K562 (cell line): ENCODE measurements at regions of chrX and their contacts with region 1.

Region 1: GRCh38 chrX:154515878-154516655 is at the start of gene FAM3A:
- DNase-seq: peak; percentile 90 to 93 (median 90)
- ATAC-seq: peak; percentile 95
- H3K4me3 ChIP-seq: peak within 1 kb of the TSS; percentile 89
- H3K27ac ChIP-seq: peak within 1 kb of the TSS; percentile 94
- H3K4me1 ChIP-seq: peaks cover 18 to 40% of the 10 kb centered on the region in 2 experiments; a peak in 4 of 5 replicates
- H3K27me3 ChIP-seq: no peaks in the 10 kb centered on the region
- CTCF ChIP-seq: no peak
- EP300 ChIP-seq: no peak; the same call in 1 of the 2 replicates
- POLR2A ChIP-seq: peak; percentile 83
- RAD21 ChIP-seq: no peak
- polyA plus RNA-seq, gene FAM3A: 0.75 to 1.8 TPM

Region 2: GRCh38 chrX:154484255-154485154 is 31.6 kb before region 1 on chrX:
- CTCF ChIA-PET with region 1: no interaction called
- POLR2A ChIA-PET with region 1: interaction called, 4 read pairs
- in situ Hi-C with region 1: no loop called
- intact Hi-C with region 1: loop called (anchors 5 kb)
- DNase-seq: peak; percentile 35 to 92 (median 61)
- ATAC-seq: peak; percentile 88
- H3K4me3 ChIP-seq: peak overlapping the region; percentile 83
- H3K27ac ChIP-seq: peak overlapping the region; percentile 87
- H3K4me1 ChIP-seq: peaks cover 48 to 84% of the 10 kb centered on the region in 2 experiments
- H3K27me3 ChIP-seq: no peaks in the 10 kb centered on the region
- CTCF ChIP-seq: no peak
- EP300 ChIP-seq: peak; percentile 79
- POLR2A ChIP-seq: peak; percentile 71
- RAD21 ChIP-seq: no peak